ENCODE measurements at regions of chr19 and their contacts with region 1.

Region 1: DNA sequence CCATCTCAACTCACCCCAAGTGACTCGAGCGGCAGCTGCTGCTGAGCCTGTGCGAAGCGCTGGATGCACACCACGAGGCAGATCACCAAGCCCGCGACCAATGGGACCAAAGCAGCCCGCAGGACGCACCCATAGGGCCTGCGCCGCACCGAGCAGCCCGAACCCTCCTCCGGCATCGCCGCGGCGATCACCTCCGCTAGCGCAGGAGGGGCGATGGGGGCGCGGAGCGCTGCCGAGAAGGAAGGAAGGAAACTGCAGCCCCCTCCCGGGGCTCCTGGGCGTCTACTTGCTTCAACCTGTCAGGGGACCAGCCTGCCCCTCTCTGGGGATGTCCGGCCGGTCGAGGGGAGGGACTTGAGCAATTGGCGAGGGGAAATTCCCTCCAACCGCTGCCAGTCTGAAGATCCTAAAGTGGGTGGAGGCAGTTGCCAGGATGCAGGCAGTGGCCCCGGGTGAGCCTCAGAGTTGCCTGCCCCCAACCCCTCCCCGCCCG is at the start of gene CD70:
- DNase-seq: peak; percentile 74
- H3K4me3 Mint-ChIP-seq: peak within 1 kb of the TSS; percentile 71
- H3K27ac Mint-ChIP-seq: no peak within 1 kb of the TSS
- H3K4me1 Mint-ChIP-seq: peaks cover 62% of the 10 kb centered on the region
- H3K27me3 Mint-ChIP-seq: peaks cover 54% of the 10 kb centered on the region
- total RNA-seq, gene CD70: 8.4 to 10.7 TPM

Region 2: DNA sequence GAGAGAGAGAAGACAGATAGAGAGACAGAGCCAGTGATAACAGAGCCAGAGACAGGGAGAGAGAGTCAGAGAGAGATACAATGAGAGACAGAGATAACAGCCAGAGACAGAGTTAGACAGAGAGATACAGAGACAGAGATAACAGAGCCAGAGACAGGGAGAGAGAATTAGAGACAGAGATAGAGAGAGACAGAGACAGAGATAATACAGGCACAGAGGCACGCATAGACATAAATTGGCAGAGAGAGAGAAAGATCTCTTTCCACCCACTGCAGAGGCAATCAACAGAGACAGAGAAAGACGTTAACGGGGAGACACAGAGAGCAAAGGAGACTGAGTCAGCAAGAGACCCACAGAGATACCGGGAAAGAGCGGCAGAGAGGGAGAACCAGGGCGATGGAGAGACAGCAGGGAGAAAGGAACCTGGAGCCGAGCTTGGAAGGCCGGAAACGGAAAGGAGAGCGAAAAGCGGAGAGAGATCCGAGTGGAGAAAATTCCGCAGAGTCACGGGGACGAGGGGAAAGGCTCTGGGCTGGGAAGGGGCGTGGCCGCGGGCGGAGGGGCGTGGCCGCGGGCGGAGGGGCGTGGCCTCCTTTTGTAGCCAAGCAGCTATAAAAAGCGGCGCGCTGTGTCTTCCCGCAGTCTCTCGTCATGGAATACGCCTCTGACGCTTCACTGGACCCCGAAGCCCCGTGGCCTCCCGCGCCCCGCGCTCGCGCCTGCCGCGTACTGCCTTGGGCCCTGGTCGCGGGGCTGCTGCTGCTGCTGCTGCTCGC is 60.3 kb before region 1 on chr19 and contains the start of gene TNFSF9:
- CTCF ChIA-PET with region 1: no interaction called
- POLR2A ChIA-PET with region 1: no interaction called
- intact Hi-C with region 1: loop called (anchors 5 kb)
- DNase-seq: peak; percentile 87
- H3K4me3 Mint-ChIP-seq: peak within 1 kb of the TSS; percentile 78
- H3K27ac Mint-ChIP-seq: peak within 1 kb of the TSS; percentile 40
- H3K4me1 Mint-ChIP-seq: peaks cover 28% of the 10 kb centered on the region
- H3K27me3 Mint-ChIP-seq: peaks cover 24% of the 10 kb centered on the region
- total RNA-seq, gene TNFSF9: 1.2 to 1.4 TPM

Region 3: GRCh38 chr19:6551607-6552450 is 39.0 kb before region 1 on chr19:
- CTCF ChIA-PET with region 1: no interaction called
- POLR2A ChIA-PET with region 1: interaction called, 3 read pairs
- intact Hi-C with region 1: loop called (anchors 5 kb)
- DNase-seq: peak; percentile 74
- H3K4me3 Mint-ChIP-seq: no peak overlapping the region
- H3K27ac Mint-ChIP-seq: no peak overlapping the region
- H3K4me1 Mint-ChIP-seq: peaks cover 7% of the 10 kb centered on the region
- H3K27me3 Mint-ChIP-seq: no peaks in the 10 kb centered on the region

Region 4: DNA sequence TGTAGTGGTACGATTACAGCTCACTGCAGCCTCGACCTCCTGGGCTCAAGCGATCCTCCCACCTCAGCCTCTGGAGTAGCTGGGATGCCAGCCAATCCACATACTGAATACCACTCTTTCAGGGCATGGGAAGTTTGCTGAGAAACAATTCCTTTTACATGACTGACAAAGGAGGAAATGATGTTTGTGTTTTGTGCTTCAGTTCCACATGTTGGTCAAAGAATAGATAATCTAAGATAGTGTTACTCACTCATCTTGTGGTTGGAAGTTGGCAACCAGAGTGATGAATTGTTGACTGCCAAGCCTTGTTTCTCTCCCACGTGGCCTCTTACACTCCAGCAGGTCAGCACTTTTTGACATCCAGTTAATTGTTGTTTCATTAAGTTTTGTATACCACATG is 422.8 kb after region 1 on chr19:
- CTCF ChIA-PET with region 1: no interaction called
- POLR2A ChIA-PET with region 1: no interaction called
- intact Hi-C with region 1: no loop called
- DNase-seq: peak; percentile 37
- H3K4me3 Mint-ChIP-seq: no peak overlapping the region
- H3K27ac Mint-ChIP-seq: peak overlapping the region; percentile 71
- H3K4me1 Mint-ChIP-seq: peaks cover 41% of the 10 kb centered on the region
- H3K27me3 Mint-ChIP-seq: no peaks in the 10 kb centered on the region